Psoas muscle (tissue), 8 donors: ENCODE measurements at regions of chr7 and their contacts with region 1.

Region 1: GRCh38 chr7:152463709-152464311 is 28.0 kb upstream of the KMT2C start:
- DNase-seq: peak; percentile 100
- ATAC-seq: peak; percentile 94 to 97 (median 94)
- H3K4me3 ChIP-seq: peak overlapping the region; percentile 84
- H3K27ac ChIP-seq: peak overlapping the region; percentile 98
- H3K4me1 ChIP-seq: peaks cover 14% of the 10 kb centered on the region
- H3K27me3 ChIP-seq: no peaks in the 10 kb centered on the region
- CTCF ChIP-seq: no peak

Region 2: GRCh38 chr7:152436111-152436930 is 27.5 kb before region 1 on chr7:
- intact Hi-C with region 1: loop called in 1 of 2 experiments (anchors 2 kb)
- DNase-seq: peak; percentile 96 to 98
- ATAC-seq: peak; percentile 83 to 92 (median 90)
- H3K4me3 ChIP-seq: peak overlapping the region; percentile 74
- H3K27ac ChIP-seq: peak overlapping the region; percentile 94
- H3K4me1 ChIP-seq: peaks cover 31% of the 10 kb centered on the region
- H3K27me3 ChIP-seq: no peaks in the 10 kb centered on the region
- CTCF ChIP-seq: no peak

Region 3: DNA sequence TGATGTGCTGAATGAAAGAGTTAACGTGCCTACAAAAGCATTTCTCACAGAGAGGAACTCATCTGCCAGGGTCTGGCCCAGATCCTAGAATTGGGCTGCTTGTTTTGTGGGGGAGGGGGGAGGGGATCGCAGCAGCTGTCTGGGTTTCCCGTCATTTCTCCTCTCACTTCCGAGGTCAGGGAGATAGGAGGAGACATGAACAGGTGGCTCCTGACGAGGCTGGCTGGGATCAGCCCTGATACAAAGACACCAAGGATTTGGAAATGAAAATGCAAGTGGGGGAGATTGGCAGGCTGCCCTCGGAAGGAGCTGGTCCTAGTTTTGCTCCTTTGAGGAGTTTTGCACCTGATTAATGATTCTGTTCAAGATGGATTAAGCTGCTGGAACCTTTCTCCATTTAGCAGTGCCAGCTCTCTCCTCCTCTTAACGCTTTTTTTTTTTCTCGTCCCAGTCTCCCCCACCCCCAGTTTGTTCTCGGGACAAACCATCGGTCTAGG is 58.8 kb after region 1 on chr7:
- intact Hi-C with region 1: loop called in 1 of 2 experiments (anchors 5 kb)
- DNase-seq: peak; percentile 31 to 61
- ATAC-seq: peak; percentile 87 to 96 (median 92)
- H3K4me3 ChIP-seq: peak overlapping the region; percentile 45
- H3K27ac ChIP-seq: peak overlapping the region; percentile 47
- H3K4me1 ChIP-seq: peaks cover 12% of the 10 kb centered on the region
- H3K27me3 ChIP-seq: no peaks in the 10 kb centered on the region
- CTCF ChIP-seq: no peak

Region 4: DNA sequence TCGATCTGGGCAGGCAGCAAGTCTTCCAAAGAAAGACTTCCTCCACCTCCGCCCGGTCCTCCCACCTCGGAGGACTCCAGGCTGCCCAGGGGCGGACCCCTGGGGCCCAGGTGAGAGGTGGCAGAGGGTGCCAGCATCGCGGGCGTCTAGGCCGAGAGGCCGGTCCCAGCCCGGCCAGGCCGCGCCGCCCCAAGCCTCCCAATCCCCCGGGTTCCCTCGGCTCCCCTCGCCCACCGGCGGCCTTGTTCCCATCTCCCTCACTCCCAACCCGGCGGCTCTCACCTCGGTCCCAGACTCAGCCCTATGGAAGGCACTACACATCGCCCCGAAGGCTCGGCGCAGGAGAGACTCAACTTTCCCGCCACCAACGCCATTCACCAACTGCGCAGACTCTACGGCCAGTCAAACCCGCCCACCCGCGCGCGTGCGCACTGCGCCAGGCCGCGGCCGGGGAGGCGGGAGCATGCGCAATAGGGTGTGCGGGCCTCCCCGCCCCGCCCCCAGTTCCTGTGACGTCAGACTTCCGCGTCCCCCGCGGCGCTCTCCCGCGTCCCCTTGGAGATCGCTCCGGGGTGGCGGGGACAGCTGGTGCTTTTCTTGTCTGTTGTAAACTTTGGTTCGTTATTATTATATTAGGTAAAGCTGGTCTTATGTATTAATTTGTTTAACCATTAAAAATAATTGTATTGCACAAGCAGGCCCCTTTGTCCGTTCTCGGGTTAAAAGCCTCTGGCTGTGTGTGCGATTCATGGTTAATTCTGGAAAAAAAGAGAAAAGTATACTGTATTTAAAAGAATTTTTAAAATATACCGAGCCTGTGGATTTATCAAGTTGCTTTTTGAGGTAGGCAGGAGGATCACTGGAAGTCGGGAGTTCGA is 212.2 kb after region 1 on chr7 and contains the start of gene XRCC2:
- intact Hi-C with region 1: loop called in 1 of 2 experiments (anchors 10 kb)
- DNase-seq: peak; percentile 91 to 95
- ATAC-seq: peak; percentile 99 to 100 (median 99)
- H3K4me3 ChIP-seq: peak within 1 kb of the TSS; percentile 86
- H3K27ac ChIP-seq: peak within 1 kb of the TSS; percentile 96
- H3K4me1 ChIP-seq: peaks cover 7% of the 10 kb centered on the region
- H3K27me3 ChIP-seq: no peaks in the 10 kb centered on the region
- CTCF ChIP-seq: no peak
- total RNA-seq, gene XRCC2: 0.11 to 0.26 (median 0.15) TPM

Region 5: DNA sequence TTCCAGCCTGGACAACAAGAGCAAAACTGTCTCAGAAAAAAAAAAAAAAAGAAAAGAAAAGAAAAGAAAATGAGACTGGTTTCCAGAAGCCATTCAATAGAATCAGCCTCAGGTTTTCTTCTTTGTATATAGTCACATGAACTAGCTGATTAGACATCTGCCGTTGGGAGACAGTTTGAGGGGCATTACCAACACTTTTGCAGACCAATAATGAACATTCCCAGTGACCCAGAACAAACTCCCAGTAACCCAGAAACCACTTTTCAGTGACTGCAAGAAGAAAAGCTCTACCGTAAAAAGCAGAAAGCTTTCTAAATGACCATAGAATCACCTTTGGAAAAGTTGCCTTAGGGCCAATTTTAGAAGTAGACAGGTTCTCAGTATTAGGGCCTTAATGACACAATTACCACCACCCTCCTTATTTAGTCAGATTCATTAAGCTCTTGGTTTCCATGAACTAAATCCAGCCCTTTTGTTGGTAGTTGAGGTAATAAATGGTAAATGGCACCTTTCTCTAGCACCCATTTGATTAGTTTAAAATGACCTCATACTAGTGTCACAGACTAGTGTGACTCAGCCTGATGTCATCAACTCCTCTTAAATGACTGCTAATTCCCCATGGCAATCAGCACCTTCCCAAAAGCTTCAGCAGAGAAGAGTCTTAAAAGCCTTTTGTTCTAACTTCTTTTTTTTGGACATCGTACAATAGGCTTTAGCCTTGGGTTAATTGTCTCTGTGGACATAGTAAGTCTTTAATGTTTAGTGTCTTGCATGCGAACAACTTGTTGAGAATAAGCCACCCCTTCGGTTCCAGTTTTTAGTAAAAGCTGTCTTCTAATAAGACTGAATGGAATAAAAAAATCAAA is 245.7 kb after region 1 on chr7:
- intact Hi-C with region 1: loop called in 1 of 2 experiments (anchors 10 kb)
- DNase-seq: no peak
- ATAC-seq: no peak
- H3K4me3 ChIP-seq: no peak overlapping the region
- H3K27ac ChIP-seq: no peak overlapping the region
- H3K4me1 ChIP-seq: no peaks in the 10 kb centered on the region
- H3K27me3 ChIP-seq: no peaks in the 10 kb centered on the region
- CTCF ChIP-seq: no peak